GM12878 (cell line): ENCODE measurements at regions of chr5 and their contacts with region 1.

Region 1: DNA sequence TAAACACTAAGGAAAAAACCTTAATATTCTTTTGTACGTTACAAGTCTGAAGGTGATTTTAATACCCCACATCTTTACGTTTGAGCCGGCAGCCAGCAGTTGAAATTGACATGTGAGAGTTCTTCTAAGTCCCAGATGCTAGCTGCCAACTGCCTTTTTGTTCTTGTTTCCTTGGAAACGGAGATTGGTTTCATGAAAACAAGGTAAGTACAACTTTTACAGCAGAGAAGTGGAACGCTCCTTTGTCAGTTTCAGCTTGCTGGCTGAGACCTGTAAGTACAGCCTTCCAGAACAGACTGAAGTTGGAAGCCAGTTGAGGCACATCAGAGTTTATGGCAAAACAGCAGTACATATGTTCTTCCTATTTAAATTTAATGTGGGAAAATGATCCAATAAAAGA is 1018.4 kb upstream of the ARRDC3 start:
- DNase-seq: no peak
- ATAC-seq: peak; percentile 61; the same call in 2 of the 3 replicates
- H3K4me3 ChIP-seq: no peak overlapping the region
- H3K27ac ChIP-seq: no peak overlapping the region
- H3K4me1 ChIP-seq: no peaks in the 10 kb centered on the region
- H3K27me3 ChIP-seq: no peaks in the 10 kb centered on the region
- CTCF ChIP-seq: no peak
- EP300 ChIP-seq: no peak
- POLR2A ChIP-seq: no peak
- RAD21 ChIP-seq: no peak

Region 2: DNA sequence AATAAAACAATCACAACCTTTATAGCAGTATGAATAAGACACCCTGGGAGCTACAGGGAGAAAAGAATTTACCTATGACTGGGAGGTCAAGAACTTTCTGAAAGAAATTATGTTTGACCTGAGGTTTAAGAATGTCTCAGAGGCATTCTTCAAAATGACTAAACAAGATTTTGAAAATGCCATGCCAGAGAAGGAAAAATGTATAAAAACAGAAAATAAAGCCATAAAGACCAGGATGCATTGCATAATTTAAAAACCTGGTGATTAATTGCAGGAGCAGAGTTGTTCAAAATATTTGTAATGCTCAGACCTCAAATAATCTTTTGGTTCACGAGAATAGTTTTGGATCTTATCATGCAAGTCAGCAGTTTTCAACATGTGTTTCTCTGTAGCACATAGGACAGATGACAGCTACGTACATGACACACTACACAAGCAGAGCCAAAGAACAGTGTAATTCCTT is 63.7 kb before region 1 on chr5:
- CTCF ChIA-PET with region 1: no interaction called
- POLR2A ChIA-PET with region 1: no interaction called
- RAD21 ChIA-PET with region 1: no interaction called
- SMC1A ChIA-PET with region 1: no interaction called
- in situ Hi-C with region 1: no loop called
- intact Hi-C with region 1: loop called (anchors 10 kb)
- DNase-seq: no peak
- ATAC-seq: no peak
- H3K4me3 ChIP-seq: no peak overlapping the region
- H3K27ac ChIP-seq: no peak overlapping the region
- H3K4me1 ChIP-seq: no peaks in the 10 kb centered on the region
- H3K27me3 ChIP-seq: no peaks in the 10 kb centered on the region
- CTCF ChIP-seq: no peak
- EP300 ChIP-seq: no peak
- POLR2A ChIP-seq: no peak
- RAD21 ChIP-seq: no peak

Region 3: DNA sequence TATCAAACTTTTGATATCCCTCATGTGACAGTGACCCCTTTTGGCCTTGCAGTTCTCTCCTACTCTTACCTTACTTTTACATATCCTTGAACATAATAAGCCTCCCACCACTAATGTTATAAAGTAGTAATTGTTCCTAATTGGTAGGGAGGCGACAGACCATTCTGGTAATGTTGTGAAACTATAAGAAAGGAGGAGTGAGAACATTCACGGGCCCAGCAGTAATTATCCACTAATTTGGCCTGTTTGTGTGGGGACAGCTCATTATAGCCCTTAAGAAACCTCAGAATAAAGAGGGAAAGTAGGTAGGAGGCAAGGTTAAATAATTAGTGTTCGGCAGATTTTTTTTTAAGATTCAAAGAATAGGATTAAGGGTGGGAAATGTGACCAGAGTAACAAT is 28.2 kb after region 1 on chr5:
- CTCF ChIA-PET with region 1: no interaction called
- POLR2A ChIA-PET with region 1: no interaction called
- RAD21 ChIA-PET with region 1: no interaction called
- SMC1A ChIA-PET with region 1: no interaction called
- in situ Hi-C with region 1: no loop called
- intact Hi-C with region 1: no loop called
- DNase-seq: no peak
- ATAC-seq: no peak
- H3K4me3 ChIP-seq: no peak overlapping the region
- H3K27ac ChIP-seq: no peak overlapping the region
- H3K4me1 ChIP-seq: no peaks in the 10 kb centered on the region
- H3K27me3 ChIP-seq: no peaks in the 10 kb centered on the region
- CTCF ChIP-seq: no peak
- EP300 ChIP-seq: no peak
- POLR2A ChIP-seq: no peak
- RAD21 ChIP-seq: no peak

Region 4: DNA sequence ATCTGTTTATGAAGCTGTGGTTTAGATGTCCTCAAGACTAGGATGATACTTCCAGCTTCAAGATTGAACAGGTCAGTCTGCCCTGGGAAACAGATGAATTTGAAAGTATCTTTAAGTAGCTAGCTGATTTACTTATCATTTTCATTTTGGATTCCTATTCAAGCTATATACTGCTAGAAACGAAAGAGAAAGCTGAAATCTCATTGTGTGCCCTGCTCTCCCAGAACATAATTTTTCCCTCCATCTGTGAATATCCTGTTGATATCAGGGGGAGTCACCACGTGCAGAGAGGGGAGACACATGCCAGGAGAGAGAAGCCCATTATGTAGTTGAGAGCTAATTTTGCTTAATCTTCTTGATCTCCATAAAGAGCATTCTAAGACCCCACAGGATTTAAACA is 740.5 kb after region 1 on chr5:
- CTCF ChIA-PET with region 1: no interaction called
- POLR2A ChIA-PET with region 1: no interaction called
- RAD21 ChIA-PET with region 1: no interaction called
- SMC1A ChIA-PET with region 1: no interaction called
- in situ Hi-C with region 1: no loop called
- intact Hi-C with region 1: no loop called
- DNase-seq: no peak
- ATAC-seq: no peak
- H3K4me3 ChIP-seq: no peak overlapping the region
- H3K27ac ChIP-seq: no peak overlapping the region
- H3K4me1 ChIP-seq: no peaks in the 10 kb centered on the region
- H3K27me3 ChIP-seq: no peaks in the 10 kb centered on the region
- CTCF ChIP-seq: no peak
- EP300 ChIP-seq: no peak
- POLR2A ChIP-seq: no peak
- RAD21 ChIP-seq: no peak